Activated CD4-positive, alpha-beta T cell treated with anti-CD3 and anti-CD28 coated beads, Interleukin-2, amount 10 ng/mL, durations not matched to agents 24 days and 14 days (primary cell): ENCODE measurements at regions of chr12 and their contacts with region 1.

Region 1: GRCh38 chr12:95217377-95218149 is at the starts of genes FGD6 and VEZT:
- DNase-seq: peak; percentile 99
- H3K4me3 Mint-ChIP-seq: peak within 1 kb of the TSS; percentile 89
- H3K27ac Mint-ChIP-seq: peak within 1 kb of the TSS; percentile 95
- H3K4me1 Mint-ChIP-seq: peaks cover 24% of the 10 kb centered on the region
- H3K27me3 Mint-ChIP-seq: peaks cover 15% of the 10 kb centered on the region
- total RNA-seq, gene FGD6: 0.45 and 0.70 TPM in 2 replicates
- total RNA-seq, gene VEZT: 57.7 and 58.8 TPM in 2 replicates

Region 2: DNA sequence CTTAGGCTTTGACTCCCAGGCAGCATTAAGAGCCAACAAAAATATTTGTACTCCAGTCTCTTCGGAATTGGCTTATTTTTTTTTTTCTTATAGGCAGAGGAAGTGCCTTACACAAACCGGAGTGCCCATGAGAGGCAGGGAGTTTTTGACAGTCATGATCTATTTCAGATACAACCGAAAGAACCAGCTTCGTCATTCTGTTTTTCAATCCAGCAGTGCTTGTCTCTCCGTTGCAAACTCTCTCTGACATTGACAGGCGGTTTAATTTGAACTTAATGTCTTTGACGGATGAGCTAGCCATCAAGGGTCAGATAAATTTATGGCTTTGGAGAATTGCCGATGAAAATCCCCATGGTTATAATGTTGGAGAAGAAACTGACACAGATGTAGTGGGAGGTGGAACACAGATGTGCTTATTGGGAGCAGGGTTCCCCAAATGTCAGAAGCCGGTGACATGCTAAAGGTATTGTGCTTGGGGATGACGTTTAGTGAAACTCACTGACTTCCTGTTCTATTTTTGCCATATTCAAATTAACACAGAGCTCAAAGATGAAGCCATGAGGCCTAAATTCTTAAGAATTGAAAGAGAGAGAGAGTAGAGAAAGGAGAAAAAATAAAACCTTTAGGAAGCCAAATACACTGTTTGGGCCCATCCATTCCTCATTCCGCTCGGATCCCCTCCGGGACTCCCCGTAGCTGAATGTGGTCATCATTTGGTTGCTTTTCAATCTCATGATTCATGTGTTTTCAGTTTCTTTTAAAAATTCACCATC is 1009.5 kb before region 1 on chr12:
- intact Hi-C with region 1: loop called (anchors 1 kb)
- DNase-seq: peak; percentile 84
- H3K4me3 Mint-ChIP-seq: peak overlapping the region; percentile 84
- H3K27ac Mint-ChIP-seq: peak overlapping the region; percentile 95
- H3K4me1 Mint-ChIP-seq: peaks cover 59% of the 10 kb centered on the region
- H3K27me3 Mint-ChIP-seq: no peaks in the 10 kb centered on the region

Region 3: DNA sequence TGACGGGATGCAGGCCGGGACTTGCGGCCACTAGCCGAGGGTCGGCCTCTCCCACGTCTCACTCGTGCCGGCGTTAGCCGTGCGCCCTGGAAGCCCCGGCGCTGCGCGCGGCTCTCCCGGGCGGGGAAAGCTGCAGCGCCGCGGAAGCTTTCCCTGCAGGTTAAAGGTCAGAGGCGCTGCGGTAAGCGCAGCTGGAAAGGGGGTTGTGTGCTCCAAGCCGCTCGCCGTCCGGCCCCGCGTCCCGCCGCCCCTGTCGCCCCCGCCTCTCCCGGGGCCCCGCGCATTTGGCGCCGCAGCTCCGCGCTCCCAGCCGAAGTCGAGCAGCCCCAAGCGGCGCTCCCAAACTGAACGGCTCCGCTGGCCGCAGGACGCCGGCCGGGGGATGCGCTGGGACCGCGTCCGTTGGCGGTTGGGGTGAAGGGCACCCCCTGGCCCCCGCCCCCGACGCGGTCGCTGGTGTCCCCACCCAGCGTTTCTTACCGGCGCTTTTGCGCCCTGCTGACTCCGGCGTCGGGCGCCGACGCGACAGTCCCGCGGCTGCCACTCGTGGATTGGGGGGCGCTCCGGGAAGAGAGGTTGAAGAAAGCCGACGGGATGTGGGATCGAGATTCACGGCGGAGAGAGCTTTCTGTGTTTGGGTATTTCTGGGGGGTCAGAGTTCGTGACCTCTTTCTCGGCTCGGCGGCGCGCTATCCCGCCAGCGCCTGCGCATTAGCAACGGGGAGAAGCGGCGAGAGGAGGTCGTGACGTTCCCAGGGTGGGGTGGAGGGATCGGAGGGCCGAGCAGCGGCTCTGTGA is 144.5 kb before region 1 on chr12 and contains the start of gene NR2C1:
- intact Hi-C with region 1: loop called (anchors 2 kb)
- DNase-seq: peak; percentile 97
- H3K4me3 Mint-ChIP-seq: peak within 1 kb of the TSS; percentile 91
- H3K27ac Mint-ChIP-seq: peak within 1 kb of the TSS; percentile 90
- H3K4me1 Mint-ChIP-seq: peaks cover 8% of the 10 kb centered on the region
- H3K27me3 Mint-ChIP-seq: peaks cover 3% of the 10 kb centered on the region
- total RNA-seq, gene NR2C1: 24.4 and 28.5 TPM in 2 replicates

Region 4: GRCh38 chr12:95117178-95117599 is 100.4 kb before region 1 on chr12:
- intact Hi-C with region 1: loop called (anchors 1 kb)
- DNase-seq: peak; percentile 86
- H3K4me3 Mint-ChIP-seq: no peak overlapping the region
- H3K27ac Mint-ChIP-seq: no peak overlapping the region
- H3K4me1 Mint-ChIP-seq: peaks cover 2% of the 10 kb centered on the region
- H3K27me3 Mint-ChIP-seq: no peaks in the 10 kb centered on the region

Region 5: DNA sequence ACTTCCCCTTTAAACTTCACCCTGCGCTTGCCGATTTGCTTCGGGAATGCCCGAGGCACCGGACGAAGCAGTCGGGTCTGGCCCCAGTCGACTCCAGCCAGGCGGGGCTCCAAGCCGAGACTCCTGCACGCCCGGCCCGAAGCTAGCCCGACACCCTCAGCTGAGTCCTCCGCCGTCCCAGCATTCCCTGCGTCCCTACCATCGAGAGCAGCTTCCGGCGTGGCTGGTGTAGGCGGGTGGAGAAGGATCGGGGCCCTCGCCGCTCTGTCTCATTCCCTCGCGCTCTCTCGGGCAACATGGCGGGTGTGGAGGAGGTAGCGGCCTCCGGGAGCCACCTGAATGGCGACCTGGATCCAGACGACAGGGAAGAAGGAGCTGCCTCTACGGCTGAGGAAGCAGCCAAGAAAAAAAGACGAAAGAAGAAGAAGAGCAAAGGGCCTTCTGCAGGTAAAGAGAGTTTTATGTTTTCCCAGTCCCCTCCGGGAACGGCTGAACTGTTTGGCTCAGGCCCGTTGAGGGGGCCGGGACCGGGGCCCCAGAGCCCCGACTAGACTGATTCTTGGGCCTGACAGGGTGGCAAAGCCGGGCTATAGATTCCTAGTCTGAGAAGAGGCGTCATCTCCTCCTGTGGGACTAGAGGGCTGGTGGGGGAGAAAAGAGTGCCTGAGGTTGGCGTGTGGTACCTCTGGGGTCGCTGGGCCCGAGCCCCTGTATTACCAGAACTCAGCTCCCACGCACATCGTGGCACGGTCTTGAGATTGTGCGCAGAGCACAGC is 256.5 kb after region 1 on chr12 and contains the start of gene METAP2:
- intact Hi-C with region 1: loop called (anchors 1 kb)
- DNase-seq: peak; percentile 97
- H3K4me3 Mint-ChIP-seq: peak within 1 kb of the TSS; percentile 94
- H3K27ac Mint-ChIP-seq: peak within 1 kb of the TSS; percentile 100
- H3K4me1 Mint-ChIP-seq: peaks cover 32% of the 10 kb centered on the region
- H3K27me3 Mint-ChIP-seq: no peaks in the 10 kb centered on the region
- total RNA-seq, gene METAP2: 125 and 133 TPM in 2 replicates

Region 6: DNA sequence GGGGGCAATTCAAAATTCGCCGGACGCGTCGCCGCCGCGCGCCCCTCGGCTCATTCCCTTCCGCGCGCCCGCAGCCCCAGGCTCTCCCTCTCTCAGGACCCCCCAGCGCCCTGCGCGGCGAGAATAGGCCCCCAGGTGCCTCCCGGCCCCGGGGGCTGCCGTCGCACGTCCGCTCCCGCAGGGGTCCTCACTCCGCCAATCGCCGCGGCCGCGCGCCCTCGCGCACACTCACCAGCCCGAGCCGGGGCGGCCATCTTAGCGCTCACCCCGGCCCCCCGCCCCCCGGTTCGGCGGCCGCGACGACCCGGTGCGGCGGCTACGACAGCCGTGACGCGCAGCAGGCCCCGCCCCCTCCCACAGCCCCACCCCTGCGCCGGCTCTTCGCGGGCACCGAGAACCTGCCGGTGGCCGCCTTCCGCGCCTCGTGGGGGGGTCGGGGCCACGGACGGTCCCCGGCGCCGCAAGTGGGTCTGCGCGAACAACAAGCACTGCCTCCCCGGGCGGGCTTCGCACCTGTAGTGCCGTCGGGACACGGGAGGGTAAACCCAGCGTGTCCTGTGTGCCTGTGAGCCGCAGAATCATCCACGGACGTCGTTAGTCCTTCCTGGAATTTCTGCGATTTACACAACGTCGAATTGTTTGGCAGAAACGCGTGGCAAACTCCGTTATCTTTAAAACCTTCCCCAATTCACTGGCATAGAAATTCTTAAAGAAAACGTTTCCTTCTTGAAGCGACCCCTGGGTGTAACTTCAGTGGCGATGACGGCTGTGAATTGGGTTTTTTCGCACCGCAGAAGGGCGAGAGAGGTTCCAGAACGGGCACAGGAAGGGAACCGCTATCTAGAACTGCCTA is 331.2 kb after region 1 on chr12:
- intact Hi-C with region 1: loop called (anchors 2 kb)
- DNase-seq: peak; percentile 90
- H3K4me3 Mint-ChIP-seq: peak overlapping the region; percentile 89
- H3K27ac Mint-ChIP-seq: peak overlapping the region; percentile 79
- H3K4me1 Mint-ChIP-seq: peaks cover 44% of the 10 kb centered on the region
- H3K27me3 Mint-ChIP-seq: peaks cover 23% of the 10 kb centered on the region

Region 7: GRCh38 chr12:96035278-96036236 is 818.0 kb after region 1 on chr12 and contains the start of gene LTA4H:
- intact Hi-C with region 1: loop called (anchors 5 kb)
- DNase-seq: peak; percentile 98
- H3K4me3 Mint-ChIP-seq: no peak within 1 kb of the TSS
- H3K27ac Mint-ChIP-seq: no peak within 1 kb of the TSS
- H3K4me1 Mint-ChIP-seq: peaks cover 6% of the 10 kb centered on the region
- H3K27me3 Mint-ChIP-seq: no peaks in the 10 kb centered on the region
- total RNA-seq, gene LTA4H: 63.4 and 64.1 TPM in 2 replicates